H1 (cell line): ENCODE measurements at regions of chr4 and their contacts with region 1.

Region 1: GRCh38 chr4:110516106-110516922 is 40.4 kb downstream of the ENPEP start:
- DNase-seq: peak; percentile 50 to 80
- H3K4me3 ChIP-seq: no peak overlapping the region
- H3K27ac ChIP-seq: no peak overlapping the region
- H3K4me1 ChIP-seq: no peaks in the 10 kb centered on the region
- H3K27me3 ChIP-seq: no peaks in the 10 kb centered on the region
- CTCF ChIP-seq: peak; percentile 49 to 84 (median 76)
- EP300 ChIP-seq: no peak
- POLR2A ChIP-seq: no peak
- RAD21 ChIP-seq: peak; percentile 70 to 72

Region 2: GRCh38 chr4:109998867-109999584 is 517.3 kb before region 1 on chr4:
- CTCF ChIA-PET with region 1: interaction called, 389 read pairs
- POLR2A ChIA-PET with region 1: no interaction called
- DNase-seq: no peak
- H3K4me3 ChIP-seq: no peak overlapping the region
- H3K27ac ChIP-seq: no peak overlapping the region
- H3K4me1 ChIP-seq: no peaks in the 10 kb centered on the region
- H3K27me3 ChIP-seq: no peaks in the 10 kb centered on the region
- CTCF ChIP-seq: peak in 2 of 3 experiments; percentile 62 to 76; a peak in 3 of 4 replicates
- EP300 ChIP-seq: no peak
- POLR2A ChIP-seq: no peak
- RAD21 ChIP-seq: peak; percentile 81 to 86

Region 3: GRCh38 chr4:110310795-110311194 is 205.5 kb before region 1 on chr4:
- CTCF ChIA-PET with region 1: interaction called, 75 read pairs
- POLR2A ChIA-PET with region 1: no interaction called
- DNase-seq: no peak
- H3K4me3 ChIP-seq: no peak overlapping the region
- H3K27ac ChIP-seq: no peak overlapping the region
- H3K4me1 ChIP-seq: no peaks in the 10 kb centered on the region
- H3K27me3 ChIP-seq: no peaks in the 10 kb centered on the region
- CTCF ChIP-seq: no peak
- EP300 ChIP-seq: no peak
- POLR2A ChIP-seq: no peak
- RAD21 ChIP-seq: no peak

Region 4: GRCh38 chr4:110503270-110504083 is 12.8 kb before region 1 on chr4:
- CTCF ChIA-PET with region 1: interaction called, 23 read pairs
- POLR2A ChIA-PET with region 1: no interaction called
- DNase-seq: no peak
- H3K4me3 ChIP-seq: no peak overlapping the region
- H3K27ac ChIP-seq: no peak overlapping the region
- H3K4me1 ChIP-seq: peaks cover 0 to 4% (median 0%) of the 10 kb centered on the region in 4 experiments; a peak in 2 of 7 replicates
- H3K27me3 ChIP-seq: no peaks in the 10 kb centered on the region
- CTCF ChIP-seq: peak in 2 of 3 experiments; percentile 2 to 5; a peak in 1 of 4 replicates
- EP300 ChIP-seq: no peak
- POLR2A ChIP-seq: no peak
- RAD21 ChIP-seq: peak in 1 of 2 experiments; percentile 8; a peak in 1 of 4 replicates

Region 5: DNA sequence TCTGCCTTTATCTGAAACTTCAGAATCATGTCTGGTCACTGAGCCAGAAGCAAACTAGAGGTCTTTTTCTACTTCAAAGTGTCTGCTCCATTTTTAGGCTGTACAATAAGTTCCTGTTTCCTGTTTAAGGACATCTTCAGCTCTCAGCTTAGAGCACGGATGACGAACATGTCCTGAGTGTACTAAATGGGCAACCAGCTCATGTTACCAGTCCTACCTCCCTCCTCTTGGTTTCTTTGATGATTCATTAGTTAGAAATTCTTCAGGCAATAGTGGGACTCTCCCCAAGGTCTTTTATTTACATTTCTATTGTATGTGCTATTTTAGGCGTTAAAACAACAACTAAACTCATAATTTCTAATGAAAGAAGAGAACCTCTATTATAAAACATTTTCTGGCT is 17.6 kb after region 1 on chr4:
- CTCF ChIA-PET with region 1: interaction called, 34 read pairs
- POLR2A ChIA-PET with region 1: no interaction called
- DNase-seq: no peak
- H3K4me3 ChIP-seq: no peak overlapping the region
- H3K27ac ChIP-seq: no peak overlapping the region
- H3K4me1 ChIP-seq: peaks cover 0 to 2% (median under 1%) of the 10 kb centered on the region in 4 experiments; a peak in 2 of 7 replicates
- H3K27me3 ChIP-seq: no peaks in the 10 kb centered on the region
- CTCF ChIP-seq: no peak
- EP300 ChIP-seq: no peak
- POLR2A ChIP-seq: no peak
- RAD21 ChIP-seq: no peak

Region 6: GRCh38 chr4:110567214-110567613 is 50.9 kb after region 1 on chr4:
- CTCF ChIA-PET with region 1: no interaction called
- POLR2A ChIA-PET with region 1: no interaction called
- DNase-seq: no peak
- H3K4me3 ChIP-seq: no peak overlapping the region
- H3K27ac ChIP-seq: no peak overlapping the region
- H3K4me1 ChIP-seq: no peaks in the 10 kb centered on the region
- H3K27me3 ChIP-seq: no peaks in the 10 kb centered on the region
- CTCF ChIP-seq: no peak
- EP300 ChIP-seq: no peak
- POLR2A ChIP-seq: no peak
- RAD21 ChIP-seq: no peak